Mammary epithelial cell (primary cell): ENCODE measurements at regions of chr17 and their contacts with region 1.

Region 1: DNA sequence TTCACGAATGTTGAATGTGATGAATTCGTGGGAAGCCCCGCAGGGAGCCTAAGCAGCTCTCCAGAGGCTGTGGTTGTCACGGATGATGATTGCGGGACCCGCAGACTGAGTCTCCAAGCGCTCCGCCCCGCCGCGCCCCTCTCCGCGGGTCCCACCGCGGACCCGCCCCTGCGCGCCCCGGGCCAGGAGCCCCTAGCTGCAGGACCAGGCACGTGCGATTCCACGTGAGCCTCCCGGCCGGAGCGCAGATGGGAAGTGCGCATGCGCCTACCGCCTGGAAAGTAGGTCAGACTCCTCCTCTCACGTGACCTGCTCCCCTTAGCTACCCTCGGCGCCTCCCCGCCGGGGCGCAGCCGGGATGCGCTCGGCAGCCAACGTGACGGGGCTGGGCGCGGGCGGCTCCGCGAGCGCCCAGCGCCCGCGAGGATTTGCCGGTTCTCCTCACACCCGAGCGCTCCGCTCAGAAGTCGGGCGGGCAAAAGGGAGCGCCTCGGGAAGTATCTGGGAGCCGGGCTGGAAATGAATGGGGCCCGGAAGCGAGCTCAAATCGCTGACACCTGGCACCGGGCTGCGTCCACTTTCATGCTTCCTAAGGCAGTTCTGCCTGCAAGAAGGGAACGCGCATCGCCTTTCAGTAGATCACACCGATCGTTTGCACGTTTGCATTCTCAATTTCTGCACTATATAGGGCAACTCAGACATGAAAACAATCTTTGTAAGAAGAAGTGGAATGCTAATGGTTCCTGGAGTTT is 26.4 kb upstream of the HLF start:
- DNase-seq: peak; percentile 89
- H3K4me3 ChIP-seq: peak overlapping the region; percentile 33 to 65 (median 65)
- H3K27ac ChIP-seq: peak overlapping the region; percentile 20
- H3K4me1 ChIP-seq: peaks cover 9% of the 10 kb centered on the region
- H3K27me3 ChIP-seq: no peaks in the 10 kb centered on the region
- CTCF ChIP-seq: no peak

Region 2: GRCh38 chr17:55062921-55063320 is 175.4 kb before region 1 on chr17:
- CTCF ChIA-PET with region 1: no interaction called
- dilution Hi-C with region 1: no loop called
- in situ Hi-C with region 1: no loop called
- intact Hi-C with region 1: loop called (anchors 5 kb)
- DNase-seq: peak; percentile 68
- H3K4me3 ChIP-seq: no peak overlapping the region
- H3K27ac ChIP-seq: no peak overlapping the region
- H3K4me1 ChIP-seq: peaks cover 8% of the 10 kb centered on the region
- H3K27me3 ChIP-seq: no peaks in the 10 kb centered on the region
- CTCF ChIP-seq: no peak

Region 3: GRCh38 chr17:55264645-55265298 is 26.4 kb after region 1 on chr17 and contains the start of gene HLF:
- CTCF ChIA-PET with region 1: interaction called, 4 read pairs
- dilution Hi-C with region 1: no loop called
- in situ Hi-C with region 1: no loop called
- intact Hi-C with region 1: loop called (anchors 1 kb)
- DNase-seq: peak; percentile 67
- H3K4me3 ChIP-seq: peak within 1 kb of the TSS; percentile 30 to 44 (median 30)
- H3K27ac ChIP-seq: no peak within 1 kb of the TSS
- H3K4me1 ChIP-seq: peaks cover 4% of the 10 kb centered on the region
- H3K27me3 ChIP-seq: peaks cover 14% of the 10 kb centered on the region
- CTCF ChIP-seq: no peak
- total RNA-seq, gene HLF: 0.21 to 0.67 TPM

Region 4: GRCh38 chr17:55295411-55296170 is 57.2 kb after region 1 on chr17:
- CTCF ChIA-PET with region 1: no interaction called
- dilution Hi-C with region 1: no loop called
- in situ Hi-C with region 1: no loop called
- intact Hi-C with region 1: loop called (anchors 1 kb)
- DNase-seq: peak; percentile 51
- H3K4me3 ChIP-seq: no peak overlapping the region
- H3K27ac ChIP-seq: no peak overlapping the region
- H3K4me1 ChIP-seq: no peaks in the 10 kb centered on the region
- H3K27me3 ChIP-seq: no peaks in the 10 kb centered on the region
- CTCF ChIP-seq: peak; percentile 86 to 91